Right cardiac atrium (tissue), 5 donors: ENCODE measurements at regions of chr10 and their contacts with region 1.

Region 1: GRCh38 chr10:101840741-101841453 is 2.7 kb downstream of the KCNIP2 start:
- DNase-seq: peak; percentile 83 to 93 (median 92)
- ATAC-seq: peak; percentile 74 to 83
- H3K4me3 ChIP-seq: peak overlapping the region; percentile 52
- H3K27ac ChIP-seq: no peak overlapping the region
- H3K4me1 ChIP-seq: no peaks in the 10 kb centered on the region
- H3K27me3 ChIP-seq: no peaks in the 10 kb centered on the region

Region 2: GRCh38 chr10:102009801-102010425 is 169.0 kb after region 1 on chr10:
- intact Hi-C with region 1: loop called (anchors 2 to 5 kb)
- DNase-seq: peak in 1 of 3 donors; percentile 31
- ATAC-seq: peak; percentile 93
- H3K4me3 ChIP-seq: no peak overlapping the region
- H3K27ac ChIP-seq: no peak overlapping the region
- H3K4me1 ChIP-seq: no peaks in the 10 kb centered on the region
- H3K27me3 ChIP-seq: no peaks in the 10 kb centered on the region

Region 3: GRCh38 chr10:102120142-102120990 is 279.5 kb after region 1 on chr10 and contains the start of gene LDB1:
- intact Hi-C with region 1: no loop called
- DNase-seq: peak; percentile 81 to 93 (median 93)
- ATAC-seq: peak; percentile 74 to 80
- H3K4me3 ChIP-seq: peak within 1 kb of the TSS; percentile 61
- H3K27ac ChIP-seq: peak within 1 kb of the TSS; percentile 95
- H3K4me1 ChIP-seq: peaks cover 10% of the 10 kb centered on the region
- H3K27me3 ChIP-seq: no peaks in the 10 kb centered on the region
- total RNA-seq, gene LDB1: 48.7 to 90.9 (median 70.3) TPM